ENCODE measurements at regions of chr7 and their contacts with region 1.

Region 1: GRCh38 chr7:40566879-40567278 is 432.1 kb downstream of the SUGCT start:
- DNase-seq: no peak
- H3K27ac ChIP-seq: no peak overlapping the region
- CTCF ChIP-seq: no peak

Region 2: GRCh38 chr7:40382145-40382544 is 184.7 kb before region 1 on chr7:
- CTCF ChIA-PET with region 1: no interaction called
- POLR2A ChIA-PET with region 1: interaction called, 12 read pairs
- DNase-seq: no peak
- H3K27ac ChIP-seq: no peak overlapping the region
- CTCF ChIP-seq: no peak

Region 3: GRCh38 chr7:40799493-40800403 is 232.9 kb after region 1 on chr7:
- CTCF ChIA-PET with region 1: no interaction called
- POLR2A ChIA-PET with region 1: no interaction called
- DNase-seq: no peak
- H3K27ac ChIP-seq: no peak overlapping the region
- CTCF ChIP-seq: no peak

Measured in RWPE1 (cell line).